ENCODE measurements at regions of chr20 and their contacts with region 1.

Region 1: DNA sequence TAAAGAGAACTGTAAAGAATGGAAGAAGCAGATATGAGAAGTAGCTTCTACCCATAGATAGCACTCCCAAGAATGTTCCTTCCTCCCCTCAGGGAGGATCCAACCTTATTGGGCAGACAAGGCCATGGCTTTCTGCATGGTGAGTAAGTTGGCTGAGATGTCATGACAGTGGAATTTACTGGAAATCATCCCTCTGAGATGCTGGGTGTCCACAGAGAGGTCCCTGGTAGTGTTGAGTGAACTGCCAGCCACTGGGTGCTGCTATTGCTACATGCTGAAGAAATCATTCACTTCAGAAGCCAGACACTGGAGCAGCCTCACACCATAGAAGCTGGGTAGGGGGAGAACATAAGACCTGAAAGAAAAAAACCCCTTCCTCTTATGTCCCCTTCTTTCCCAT is 46.4 kb upstream of the FERMT1 start:
- DNase-seq: peak; percentile 40
- H3K4me3 ChIP-seq: no peak overlapping the region
- H3K27ac ChIP-seq: no peak overlapping the region
- H3K4me1 ChIP-seq: no peaks in the 10 kb centered on the region
- H3K27me3 ChIP-seq: no peaks in the 10 kb centered on the region
- CTCF ChIP-seq: peak; percentile 42 to 50

Region 2: DNA sequence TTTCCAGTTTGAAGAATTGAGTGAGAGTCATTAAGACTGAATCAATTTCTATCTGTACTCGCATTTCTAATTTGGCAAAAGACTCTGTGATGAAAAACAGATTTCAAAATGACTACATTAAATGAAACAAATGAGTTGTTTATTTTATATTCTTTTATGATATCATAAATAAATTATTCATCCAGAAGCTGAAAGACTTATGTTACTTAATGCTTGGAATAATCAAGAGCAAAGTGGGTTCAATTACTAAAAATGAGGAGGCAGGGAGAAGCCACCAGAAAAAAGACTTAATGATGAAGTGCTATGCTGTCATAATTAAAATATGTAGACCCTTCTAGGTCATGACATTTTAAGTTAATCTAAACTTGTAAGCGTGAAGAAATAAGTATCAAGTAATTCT is 84.1 kb after region 1 on chr20:
- CTCF ChIA-PET with region 1: no interaction called
- dilution Hi-C with region 1: loop called (anchors 5 kb)
- in situ Hi-C with region 1: no loop called
- intact Hi-C with region 1: no loop called
- DNase-seq: no peak
- H3K4me3 ChIP-seq: no peak overlapping the region
- H3K27ac ChIP-seq: no peak overlapping the region
- H3K4me1 ChIP-seq: no peaks in the 10 kb centered on the region
- H3K27me3 ChIP-seq: no peaks in the 10 kb centered on the region
- CTCF ChIP-seq: no peak

Region 3: DNA sequence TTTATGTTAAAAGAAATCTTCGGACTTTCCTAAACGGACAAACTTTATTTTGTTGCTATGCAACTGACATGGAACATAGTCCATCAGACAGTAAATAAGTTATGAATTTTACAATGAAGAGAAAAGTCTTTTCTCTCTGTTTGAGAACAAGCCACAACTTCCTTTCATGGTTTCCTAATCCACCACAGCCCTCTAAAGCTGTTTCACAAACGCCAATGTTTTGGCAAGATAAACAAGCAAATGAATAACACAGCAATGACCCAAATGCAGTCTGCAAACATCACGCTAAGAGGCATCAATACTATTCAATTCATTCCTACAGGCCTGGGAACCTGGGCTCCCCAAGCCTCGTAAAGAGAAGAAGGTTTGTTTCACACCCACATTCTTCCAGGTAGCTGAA is 1710.6 kb after region 1 on chr20:
- CTCF ChIA-PET with region 1: no interaction called
- dilution Hi-C with region 1: no loop called
- in situ Hi-C with region 1: loop called in 1 of 2 experiments (anchors 25 kb)
- intact Hi-C with region 1: no loop called
- DNase-seq: peak; percentile 14
- H3K4me3 ChIP-seq: no peak overlapping the region
- H3K27ac ChIP-seq: no peak overlapping the region
- H3K4me1 ChIP-seq: no peaks in the 10 kb centered on the region
- H3K27me3 ChIP-seq: no peaks in the 10 kb centered on the region
- CTCF ChIP-seq: no peak